ENCODE measurements at regions of chr19 and their contacts with region 1.

Region 1: DNA sequence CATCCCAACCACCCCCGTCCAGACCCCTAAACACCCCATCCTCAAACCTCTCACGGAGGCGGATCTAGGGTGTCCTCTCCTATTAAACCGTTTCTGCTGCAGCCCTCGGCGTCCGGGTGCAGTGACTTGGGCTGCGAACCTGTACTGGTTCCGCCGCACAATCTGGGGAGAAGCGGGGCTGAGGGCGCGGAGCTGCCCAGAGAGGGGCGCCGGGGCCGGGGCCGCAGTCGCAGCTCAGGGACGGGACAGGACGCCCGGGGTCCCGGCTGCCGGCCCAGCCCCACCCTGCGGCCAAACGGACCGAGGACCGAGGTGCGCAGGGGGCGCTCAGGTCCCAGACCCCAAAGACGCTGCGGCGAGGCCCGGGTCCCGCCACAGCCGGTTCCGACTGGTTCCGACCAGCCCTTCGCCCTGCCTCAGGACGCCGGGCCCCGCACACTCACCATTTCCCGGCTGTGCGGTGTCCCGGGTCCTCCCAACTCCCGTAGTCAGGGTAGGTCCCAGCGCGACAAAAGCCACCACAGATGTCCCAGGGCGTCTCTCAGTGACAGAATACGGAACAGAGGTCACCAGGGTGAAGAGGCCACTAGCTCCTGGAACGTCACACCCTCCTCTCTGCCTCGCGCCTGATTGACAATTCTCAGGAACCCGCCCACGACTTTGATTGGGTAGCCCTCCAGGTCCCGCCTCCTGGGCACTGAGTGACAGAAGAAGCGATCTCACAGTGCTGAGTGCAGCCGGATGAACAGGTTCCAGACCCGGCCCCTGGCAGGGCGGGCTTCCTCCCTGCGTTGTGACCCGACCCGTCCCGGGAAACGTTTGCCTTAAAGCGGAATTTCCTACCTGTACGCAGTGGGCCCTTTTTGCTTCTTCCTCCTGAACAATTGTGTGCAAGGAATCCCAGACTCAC is at the start of gene ZNF44:
- DNase-seq: peak; percentile 99
- total RNA-seq, gene ZNF44: 12.0 to 14.5 TPM

Region 2: GRCh38 chr19:12117203-12117970 is 177.1 kb before region 1 on chr19:
- intact Hi-C with region 1: no loop called
- DNase-seq: no peak

Region 3: GRCh38 chr19:12166626-12167025 is 127.9 kb before region 1 on chr19:
- intact Hi-C with region 1: loop called in 1 of 2 experiments (anchors 10 kb)
- DNase-seq: no peak

Region 4: DNA sequence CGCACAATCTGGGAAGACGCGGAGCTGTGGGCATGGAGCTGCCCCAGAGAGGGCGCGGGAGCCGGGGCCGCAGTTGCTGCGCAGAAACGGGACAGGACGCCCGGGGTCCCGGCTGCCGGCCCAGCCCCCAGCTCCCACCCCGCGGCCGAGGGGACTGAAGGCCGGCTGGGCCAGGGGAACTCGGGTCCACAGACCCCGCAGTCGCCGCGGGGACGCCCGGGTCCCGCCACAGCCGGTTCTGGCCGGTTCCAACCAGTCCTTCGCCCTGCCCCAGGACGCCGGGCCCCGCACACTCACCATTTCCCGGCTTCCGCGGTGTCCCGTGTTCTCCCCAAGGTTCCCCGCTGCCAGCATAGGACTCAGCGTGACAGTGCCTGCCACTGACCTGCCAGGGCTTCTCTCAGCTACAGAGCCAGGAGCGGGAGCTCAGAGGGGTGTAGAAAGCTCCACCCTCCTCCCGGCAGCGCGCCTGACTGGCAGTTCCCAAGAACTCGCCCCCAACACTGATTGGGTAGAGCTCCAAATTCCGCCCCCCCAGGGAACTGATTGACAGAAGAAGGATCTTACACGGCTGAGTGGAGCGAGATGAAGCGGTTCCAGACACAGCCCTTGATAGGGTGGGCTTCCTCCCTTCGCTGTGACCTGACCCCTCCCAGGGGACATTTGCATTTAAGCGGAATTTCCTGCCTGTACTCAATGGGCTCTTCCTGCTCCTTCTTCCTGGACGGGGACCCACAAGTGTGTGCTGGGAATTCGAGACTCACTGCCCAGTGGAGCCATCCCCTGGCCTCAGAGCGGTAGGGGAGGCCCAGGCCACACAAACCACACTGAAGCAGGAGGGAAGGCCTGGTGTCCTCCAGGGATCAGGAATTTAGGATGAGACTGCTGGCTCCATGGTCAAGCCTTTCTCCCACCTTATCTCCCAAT is 71.0 kb after region 1 on chr19 and contains the start of gene ZNF442:
- intact Hi-C with region 1: loop called in 1 of 2 experiments (anchors 10 kb)
- DNase-seq: peak; percentile 98
- total RNA-seq, gene ZNF442: 4.9 to 7.7 TPM

Region 5: GRCh38 chr19:12465211-12465610 is 170.7 kb after region 1 on chr19:
- intact Hi-C with region 1: no loop called
- DNase-seq: no peak